ENCODE measurements at regions of chr1 and their contacts with region 1.

Region 1: DNA sequence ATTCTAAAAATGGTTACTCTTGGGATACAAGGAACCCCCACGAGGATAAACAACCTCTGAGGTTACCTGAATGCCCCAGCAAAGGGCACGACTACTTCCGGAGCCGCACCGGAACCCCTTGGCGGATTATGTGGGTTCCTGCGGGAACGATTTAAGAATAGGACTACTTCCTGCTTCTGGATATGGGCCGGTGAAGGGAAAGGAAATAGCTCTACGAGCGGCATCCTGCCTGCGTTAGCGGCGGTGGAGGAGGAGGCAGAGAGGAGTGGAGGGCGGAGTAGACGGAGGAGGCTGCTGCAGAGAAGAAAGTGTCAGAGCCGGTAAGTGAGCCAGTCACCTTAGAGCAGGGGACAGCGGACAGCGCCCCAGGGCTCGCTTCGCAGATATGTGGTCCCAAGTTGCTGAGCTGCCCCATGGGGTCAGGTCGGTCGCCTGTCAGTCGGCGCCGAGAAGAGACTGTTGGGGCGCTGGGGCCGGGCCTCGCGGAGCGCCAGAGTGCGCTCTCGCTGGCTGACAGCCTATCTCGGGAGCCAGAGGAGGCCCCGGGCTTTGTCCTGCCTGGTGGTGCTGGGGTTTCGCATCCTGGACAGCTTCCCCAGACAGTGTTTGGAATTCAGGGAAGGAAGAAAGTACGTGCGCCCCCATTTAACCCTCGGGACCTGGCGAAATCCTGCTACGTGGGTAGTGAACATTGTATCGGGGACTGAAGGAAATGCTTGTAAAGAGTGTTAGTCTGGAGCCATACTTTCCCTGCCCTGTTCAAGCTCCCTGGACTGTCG is at the start of gene KLHL20:
- DNase-seq: peak; percentile 89
- H3K4me3 ChIP-seq: peak within 1 kb of the TSS; percentile 74 to 95 (median 84)
- H3K27ac ChIP-seq: peak within 1 kb of the TSS; percentile 47
- H3K4me1 ChIP-seq: peaks cover 4% of the 10 kb centered on the region
- H3K27me3 ChIP-seq: no peaks in the 10 kb centered on the region
- CTCF ChIP-seq: no peak
- total RNA-seq, gene KLHL20: 25.7 to 26.3 TPM

Region 2: GRCh38 chr1:173476664-173477285 is 238.2 kb before region 1 on chr1:
- CTCF ChIA-PET with region 1: no interaction called
- dilution Hi-C with region 1: no loop called
- in situ Hi-C with region 1: no loop called
- intact Hi-C with region 1: loop called (anchors 1 kb)
- DNase-seq: peak; percentile 86
- H3K4me3 ChIP-seq: peak overlapping the region; percentile 77 to 94 (median 92)
- H3K27ac ChIP-seq: peak overlapping the region; percentile 40
- H3K4me1 ChIP-seq: peaks cover 47% of the 10 kb centered on the region
- H3K27me3 ChIP-seq: no peaks in the 10 kb centered on the region
- CTCF ChIP-seq: no peak

Region 3: GRCh38 chr1:173527151-173527826 is 187.7 kb before region 1 on chr1:
- CTCF ChIA-PET with region 1: no interaction called
- dilution Hi-C with region 1: no loop called
- in situ Hi-C with region 1: no loop called
- intact Hi-C with region 1: no loop called
- DNase-seq: peak; percentile 70
- H3K4me3 ChIP-seq: no peak overlapping the region
- H3K27ac ChIP-seq: no peak overlapping the region
- H3K4me1 ChIP-seq: peaks cover 6% of the 10 kb centered on the region
- H3K27me3 ChIP-seq: no peaks in the 10 kb centered on the region
- CTCF ChIP-seq: no peak

Region 4: DNA sequence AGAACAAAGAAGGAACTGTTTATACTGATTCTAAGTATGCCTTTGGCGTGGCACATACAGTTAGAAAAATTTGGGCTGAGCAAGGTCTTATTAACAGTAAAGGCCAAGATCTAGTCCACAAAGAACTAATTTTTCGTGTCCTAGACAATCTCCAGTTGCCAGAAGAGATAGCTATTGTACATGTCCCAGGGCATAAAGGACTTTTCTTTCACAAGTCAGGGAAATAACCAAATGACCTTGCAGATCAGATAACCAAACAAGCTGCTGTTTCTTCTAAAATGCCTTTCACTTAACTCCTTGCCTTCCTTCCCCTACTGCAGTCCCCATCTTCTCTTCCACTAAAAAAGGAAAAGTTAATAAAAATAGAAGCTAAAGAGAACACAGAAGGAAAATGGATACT is 75.8 kb before region 1 on chr1:
- CTCF ChIA-PET with region 1: no interaction called
- dilution Hi-C with region 1: no loop called
- in situ Hi-C with region 1: no loop called
- intact Hi-C with region 1: loop called (anchors 2 kb)
- DNase-seq: no peak
- H3K4me3 ChIP-seq: no peak overlapping the region
- H3K27ac ChIP-seq: no peak overlapping the region
- H3K4me1 ChIP-seq: no peaks in the 10 kb centered on the region
- H3K27me3 ChIP-seq: no peaks in the 10 kb centered on the region
- CTCF ChIP-seq: no peak

Region 5: GRCh38 chr1:174022080-174022975 is 307.4 kb after region 1 on chr1 and contains the start of gene RC3H1:
- CTCF ChIA-PET with region 1: no interaction called
- dilution Hi-C with region 1: no loop called
- in situ Hi-C with region 1: no loop called
- intact Hi-C with region 1: no loop called
- DNase-seq: peak; percentile 89
- H3K4me3 ChIP-seq: peak within 1 kb of the TSS; percentile 87 to 98 (median 93)
- H3K27ac ChIP-seq: peak within 1 kb of the TSS; percentile 83
- H3K4me1 ChIP-seq: peaks cover 26% of the 10 kb centered on the region
- H3K27me3 ChIP-seq: no peaks in the 10 kb centered on the region
- CTCF ChIP-seq: no peak
- total RNA-seq, gene RC3H1: 22.0 to 36.5 TPM